Panc1 (cell line): ENCODE measurements at regions of chr6 and their contacts with region 1.

Region 1: DNA sequence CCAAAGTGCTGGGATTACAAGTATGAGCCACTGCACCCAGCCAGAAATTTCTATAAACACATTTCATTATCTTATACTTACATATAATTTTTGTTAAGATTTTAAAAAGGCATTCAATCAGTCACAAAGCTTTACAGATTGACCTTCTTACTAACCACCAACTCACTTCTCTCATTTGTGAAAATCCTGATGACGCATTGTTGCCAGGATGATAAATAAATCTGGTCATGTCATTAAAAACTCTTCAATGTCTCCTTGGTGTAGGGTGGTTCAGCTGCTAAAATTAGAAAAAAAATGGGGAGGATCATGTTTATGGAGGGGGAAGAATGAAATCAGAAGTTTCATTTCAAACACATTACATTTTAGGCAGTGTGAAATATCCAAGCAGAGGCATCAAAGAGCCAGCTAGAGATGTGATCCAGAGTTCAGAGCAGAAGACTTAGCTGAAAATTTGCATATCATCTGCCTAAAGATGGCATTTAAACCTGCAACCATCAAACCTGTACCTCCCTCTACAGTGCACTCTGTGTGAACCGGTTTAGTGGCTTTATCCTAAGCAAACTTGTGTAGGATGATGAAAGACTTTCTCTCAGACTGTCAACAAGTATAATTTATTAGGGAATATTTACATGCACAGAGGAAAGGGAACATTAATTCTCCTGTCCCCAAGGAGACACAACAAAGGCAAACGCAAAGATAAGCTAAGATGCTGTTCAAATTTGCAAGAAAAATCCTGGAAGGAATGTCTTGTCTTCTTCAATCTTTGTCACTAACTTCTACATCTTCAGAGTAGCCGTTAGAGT is 84.9 kb upstream of the PLEKHG1 start:
- DNase-seq: no peak
- ATAC-seq: no peak
- H3K4me3 ChIP-seq: no peak overlapping the region
- H3K27ac ChIP-seq: no peak overlapping the region
- H3K4me1 ChIP-seq: no peaks in the 10 kb centered on the region
- H3K27me3 ChIP-seq: no peaks in the 10 kb centered on the region
- CTCF ChIP-seq: no peak

Region 2: DNA sequence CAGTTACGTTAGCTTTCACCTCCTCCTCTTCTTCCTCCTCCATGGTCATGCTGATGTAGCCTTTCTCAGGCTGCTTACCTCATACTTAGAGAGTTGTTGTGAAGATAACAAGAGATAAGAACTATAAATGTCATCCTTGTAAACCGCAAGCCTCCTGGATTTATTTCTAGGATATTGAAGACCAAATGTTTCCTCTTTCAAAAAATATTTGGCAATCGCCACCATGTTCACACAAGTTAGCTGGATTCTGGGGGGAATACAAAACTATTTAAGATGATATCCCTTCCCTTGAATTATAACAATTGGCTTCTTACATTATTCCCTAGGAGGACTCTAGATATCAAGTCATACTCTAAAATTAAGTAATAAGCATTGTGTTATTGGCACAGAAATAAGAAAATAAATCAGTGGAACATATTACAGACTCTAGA is 14.9 kb before region 1 on chr6:
- CTCF ChIA-PET with region 1: no interaction called
- POLR2A ChIA-PET with region 1: no interaction called
- in situ Hi-C with region 1: no loop called
- intact Hi-C with region 1: no loop called
- DNase-seq: no peak
- ATAC-seq: no peak
- H3K4me3 ChIP-seq: no peak overlapping the region
- H3K27ac ChIP-seq: no peak overlapping the region
- H3K4me1 ChIP-seq: no peaks in the 10 kb centered on the region
- H3K27me3 ChIP-seq: no peaks in the 10 kb centered on the region
- CTCF ChIP-seq: no peak

Region 3: GRCh38 chr6:150573041-150573681 is 58.4 kb after region 1 on chr6:
- CTCF ChIA-PET with region 1: no interaction called
- POLR2A ChIA-PET with region 1: interaction called, 10 read pairs
- in situ Hi-C with region 1: no loop called
- intact Hi-C with region 1: no loop called
- DNase-seq: no peak
- ATAC-seq: no peak
- H3K4me3 ChIP-seq: no peak overlapping the region
- H3K27ac ChIP-seq: no peak overlapping the region
- H3K4me1 ChIP-seq: no peaks in the 10 kb centered on the region; the same call in 1 of the 2 replicates
- H3K27me3 ChIP-seq: no peaks in the 10 kb centered on the region
- CTCF ChIP-seq: no peak

Region 4: DNA sequence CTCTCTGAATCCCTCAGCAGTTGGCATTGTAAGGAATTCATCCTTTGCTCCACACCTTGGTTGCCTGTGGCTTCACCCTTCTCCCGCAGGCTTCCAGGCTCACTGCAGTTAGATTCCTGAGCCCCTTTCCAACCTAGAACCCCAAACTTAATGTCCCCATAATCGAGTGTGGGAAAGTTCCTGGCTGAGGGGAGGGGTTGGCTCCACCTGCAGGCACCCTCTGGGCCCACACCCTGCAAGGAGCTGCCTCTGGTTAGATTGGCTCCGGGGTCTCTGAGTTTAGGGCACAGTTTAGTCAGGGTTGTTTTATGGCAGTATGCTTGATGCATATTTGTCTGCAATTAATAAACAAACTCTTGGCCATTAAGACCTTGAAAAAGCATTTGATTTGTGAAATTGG is 414.1 kb after region 1 on chr6:
- CTCF ChIA-PET with region 1: no interaction called
- POLR2A ChIA-PET with region 1: no interaction called
- in situ Hi-C with region 1: no loop called
- intact Hi-C with region 1: no loop called
- DNase-seq: no peak
- ATAC-seq: peak; percentile 75
- H3K4me3 ChIP-seq: no peak overlapping the region
- H3K27ac ChIP-seq: no peak overlapping the region
- H3K4me1 ChIP-seq: no peaks in the 10 kb centered on the region
- H3K27me3 ChIP-seq: no peaks in the 10 kb centered on the region
- CTCF ChIP-seq: peak; percentile 64